GM12878 (cell line): ENCODE measurements at regions of chr7 and their contacts with region 1.

Region 1: DNA sequence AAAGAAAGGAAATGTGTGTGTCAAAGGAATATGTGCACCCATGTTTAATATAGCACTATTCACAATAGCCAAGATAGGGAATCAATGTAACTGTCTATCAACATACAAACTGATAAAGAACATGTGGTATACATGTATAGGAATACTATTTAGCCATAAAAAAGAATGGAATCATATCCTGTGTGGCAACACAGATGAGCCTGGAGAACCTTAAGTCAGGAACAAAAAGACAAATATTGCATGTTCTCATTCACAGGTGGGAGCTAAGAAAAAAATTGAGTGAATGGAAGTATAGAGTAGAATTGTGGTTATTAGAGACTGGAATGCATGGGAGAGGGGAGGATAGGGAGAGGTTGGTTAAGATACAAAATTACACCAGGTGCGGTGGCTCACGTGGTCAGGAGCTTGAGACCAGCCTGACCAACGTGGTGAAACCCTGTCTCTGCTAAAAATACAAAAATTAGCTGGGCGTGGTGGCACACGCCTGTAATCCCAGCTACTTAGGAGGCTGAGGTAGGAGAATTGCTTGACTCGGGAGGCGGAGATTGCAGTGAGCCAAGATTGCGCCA is 10.5 kb downstream of the URGCP start:
- DNase-seq: no peak
- ATAC-seq: no peak
- H3K4me3 ChIP-seq: no peak overlapping the region
- H3K27ac ChIP-seq: no peak overlapping the region
- H3K4me1 ChIP-seq: no peaks in the 10 kb centered on the region
- H3K27me3 ChIP-seq: no peaks in the 10 kb centered on the region
- CTCF ChIP-seq: no peak
- EP300 ChIP-seq: no peak
- POLR2A ChIP-seq: no peak
- RAD21 ChIP-seq: no peak

Region 2: GRCh38 chr7:43693687-43694398 is 202.1 kb before region 1 on chr7:
- CTCF ChIA-PET with region 1: no interaction called
- POLR2A ChIA-PET with region 1: no interaction called
- RAD21 ChIA-PET with region 1: no interaction called
- SMC1A ChIA-PET with region 1: no interaction called
- in situ Hi-C with region 1: no loop called
- intact Hi-C with region 1: no loop called
- DNase-seq: no peak
- ATAC-seq: no peak
- H3K4me3 ChIP-seq: no peak overlapping the region
- H3K27ac ChIP-seq: no peak overlapping the region
- H3K4me1 ChIP-seq: peaks cover 12% of the 10 kb centered on the region; the same call in 1 of the 2 replicates
- H3K27me3 ChIP-seq: no peaks in the 10 kb centered on the region
- CTCF ChIP-seq: no peak
- EP300 ChIP-seq: no peak
- POLR2A ChIP-seq: no peak
- RAD21 ChIP-seq: no peak

Region 3: GRCh38 chr7:43880596-43880995 is 15.3 kb before region 1 on chr7:
- CTCF ChIA-PET with region 1: no interaction called
- POLR2A ChIA-PET with region 1: no interaction called
- RAD21 ChIA-PET with region 1: no interaction called
- SMC1A ChIA-PET with region 1: interaction called, 8 read pairs
- in situ Hi-C with region 1: no loop called
- intact Hi-C with region 1: loop called (anchors 2 kb)
- DNase-seq: no peak
- ATAC-seq: no peak
- H3K4me3 ChIP-seq: no peak overlapping the region
- H3K27ac ChIP-seq: no peak overlapping the region
- H3K4me1 ChIP-seq: no peaks in the 10 kb centered on the region
- H3K27me3 ChIP-seq: no peaks in the 10 kb centered on the region
- CTCF ChIP-seq: no peak
- EP300 ChIP-seq: no peak
- POLR2A ChIP-seq: no peak
- RAD21 ChIP-seq: no peak

Region 4: GRCh38 chr7:44184206-44184872 is 288.4 kb after region 1 on chr7:
- CTCF ChIA-PET with region 1: no interaction called
- POLR2A ChIA-PET with region 1: no interaction called
- RAD21 ChIA-PET with region 1: no interaction called
- SMC1A ChIA-PET with region 1: no interaction called
- in situ Hi-C with region 1: no loop called
- intact Hi-C with region 1: no loop called
- DNase-seq: no peak
- ATAC-seq: no peak
- H3K4me3 ChIP-seq: no peak overlapping the region
- H3K27ac ChIP-seq: no peak overlapping the region
- H3K4me1 ChIP-seq: no peaks in the 10 kb centered on the region
- H3K27me3 ChIP-seq: peaks cover 0 to 1% of the 10 kb centered on the region in 2 experiments; a peak in 2 of 4 replicates
- CTCF ChIP-seq: no peak
- EP300 ChIP-seq: no peak
- POLR2A ChIP-seq: no peak
- RAD21 ChIP-seq: no peak